Activated CD4-positive, alpha-beta memory T cell treated with anti-CD3 and anti-CD28 coated beads, Interleukin-2, amount 10 ng/mL, durations not matched to agents 7 days and 5 days (primary cell): ENCODE measurements at regions of chr3 and their contacts with region 1.

Region 1: GRCh38 chr3:196632046-196632751 is 7.3 kb upstream of the NRROS start:
- DNase-seq: peak; percentile 97
- H3K4me3 Mint-ChIP-seq: peak overlapping the region; percentile 97
- H3K27ac Mint-ChIP-seq: peak overlapping the region; percentile 98
- H3K4me1 Mint-ChIP-seq: peaks cover 65% of the 10 kb centered on the region
- H3K27me3 Mint-ChIP-seq: no peaks in the 10 kb centered on the region

Region 2: GRCh38 chr3:196620161-196620604 is 12.0 kb before region 1 on chr3:
- CTCF ChIA-PET with region 1: interaction called, 8 read pairs
- POLR2A ChIA-PET with region 1: interaction called, 131 read pairs
- DNase-seq: no peak
- H3K4me3 Mint-ChIP-seq: peak overlapping the region; percentile 15
- H3K27ac Mint-ChIP-seq: peak overlapping the region; percentile 71
- H3K4me1 Mint-ChIP-seq: peaks cover 33% of the 10 kb centered on the region
- H3K27me3 Mint-ChIP-seq: no peaks in the 10 kb centered on the region